T-cell (primary cell): ENCODE measurements at regions of chr6 and their contacts with region 1.

Region 1: DNA sequence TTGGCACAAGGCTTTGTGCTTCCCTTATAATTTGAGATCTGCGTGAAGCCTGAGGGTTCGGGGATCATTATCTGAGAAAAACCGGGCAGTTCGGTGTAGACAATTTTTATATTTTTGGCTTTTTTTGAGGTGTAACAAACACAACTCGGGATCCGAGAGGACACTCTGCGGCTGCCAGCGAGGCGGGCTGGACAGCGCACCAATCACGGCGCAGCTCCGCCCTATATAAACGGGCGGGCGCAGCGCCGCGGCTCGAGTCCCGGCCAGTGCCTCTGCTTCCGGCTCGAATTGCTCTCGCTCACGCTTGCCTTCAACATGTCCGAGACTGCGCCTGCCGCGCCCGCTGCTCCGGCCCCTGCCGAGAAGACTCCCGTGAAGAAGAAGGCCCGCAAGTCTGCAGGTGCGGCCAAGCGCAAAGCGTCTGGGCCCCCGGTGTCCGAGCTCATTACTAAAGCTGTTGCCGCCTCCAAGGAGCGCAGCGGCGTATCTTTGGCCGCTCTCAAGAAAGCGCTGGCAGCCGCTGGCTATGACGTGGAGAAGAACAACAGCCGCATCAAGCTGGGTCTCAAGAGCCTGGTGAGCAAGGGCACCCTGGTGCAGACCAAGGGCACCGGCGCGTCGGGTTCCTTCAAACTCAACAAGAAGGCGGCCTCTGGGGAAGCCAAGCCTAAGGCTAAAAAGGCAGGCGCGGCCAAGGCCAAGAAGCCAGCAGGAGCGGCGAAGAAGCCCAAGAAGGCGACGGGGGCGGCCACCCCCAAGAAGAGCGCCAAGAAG is 69.0 kb downstream of the HFE start:
- DNase-seq: peak; percentile 74 to 91 (median 83)
- ATAC-seq: peak; percentile 41 to 65 (median 63)
- H3K4me3 ChIP-seq: peak overlapping the region; percentile 73 to 87
- H3K4me3 Mint-ChIP-seq: peak overlapping the region; percentile 91 to 98 (median 97)
- H3K27ac ChIP-seq: peak overlapping the region; percentile 90
- H3K27ac Mint-ChIP-seq: peak overlapping the region; percentile 94 to 98
- H3K4me1 ChIP-seq: peaks cover 15 to 31% of the 10 kb centered on the region in 2 experiments
- H3K4me1 Mint-ChIP-seq: peaks cover 28 to 60% (median 40%) of the 10 kb centered on the region in 3 donors
- H3K27me3 ChIP-seq: no peaks in the 10 kb centered on the region
- H3K27me3 Mint-ChIP-seq: no peaks in the 10 kb centered on the region

Region 2: DNA sequence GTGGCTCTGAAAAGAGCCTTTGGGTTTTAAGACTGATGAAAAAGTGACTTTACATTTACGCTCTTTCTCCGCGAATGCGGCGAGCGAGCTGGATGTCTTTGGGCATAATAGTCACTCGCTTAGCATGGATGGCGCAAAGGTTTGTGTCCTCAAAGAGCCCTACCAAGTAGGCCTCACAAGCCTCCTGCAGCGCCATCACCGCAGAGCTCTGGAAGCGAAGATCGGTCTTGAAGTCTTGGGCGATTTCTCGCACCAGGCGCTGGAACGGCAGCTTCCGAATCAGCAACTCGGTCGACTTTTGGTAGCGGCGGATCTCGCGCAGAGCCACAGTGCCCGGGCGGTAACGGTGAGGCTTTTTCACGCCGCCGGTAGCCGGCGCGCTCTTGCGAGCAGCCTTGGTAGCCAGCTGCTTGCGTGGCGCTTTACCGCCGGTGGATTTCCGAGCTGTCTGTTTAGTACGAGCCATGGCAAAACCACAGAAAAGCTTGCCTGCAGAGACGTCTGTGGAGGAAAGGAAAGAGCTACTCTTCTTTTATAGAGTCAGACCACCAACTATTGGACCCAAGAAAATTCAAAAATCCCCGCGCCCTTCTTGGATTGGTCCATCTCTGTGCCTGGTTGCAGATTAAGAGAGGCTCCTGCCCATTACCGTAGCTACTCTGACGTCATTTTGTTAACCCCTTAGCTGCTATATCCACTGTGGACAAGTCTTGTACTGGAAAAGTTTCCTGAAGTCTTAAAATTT is 124.5 kb before region 1 on chr6:
- CTCF ChIA-PET with region 1: interaction called in 1 of 2 experiments, 4 read pairs
- POLR2A ChIA-PET with region 1: interaction called in 1 of 2 experiments, 23 read pairs
- DNase-seq: peak; percentile 61 to 95 (median 87)
- ATAC-seq: peak; percentile 68 to 72 (median 70)
- H3K4me3 ChIP-seq: peak overlapping the region; percentile 61 to 84
- H3K4me3 Mint-ChIP-seq: peak overlapping the region; percentile 90 to 95 (median 92)
- H3K27ac ChIP-seq: peak overlapping the region; percentile 74
- H3K27ac Mint-ChIP-seq: peak overlapping the region; percentile 94 to 98
- H3K4me1 ChIP-seq: peaks cover 30 to 32% of the 10 kb centered on the region in 2 experiments
- H3K4me1 Mint-ChIP-seq: peaks cover 48 to 53% (median 50%) of the 10 kb centered on the region in 3 donors
- H3K27me3 ChIP-seq: no peaks in the 10 kb centered on the region
- H3K27me3 Mint-ChIP-seq: peaks cover 0 to 2% of the 10 kb centered on the region in 2 donors

Region 3: GRCh38 chr6:26136321-26136720 is 19.9 kb before region 1 on chr6:
- CTCF ChIA-PET with region 1: interaction called in 1 of 2 experiments, 3 read pairs
- POLR2A ChIA-PET with region 1: interaction called, 7 to 10 read pairs
- DNase-seq: no peak
- ATAC-seq: no peak
- H3K4me3 ChIP-seq: no peak overlapping the region
- H3K4me3 Mint-ChIP-seq: no peak overlapping the region
- H3K27ac ChIP-seq: no peak overlapping the region
- H3K27ac Mint-ChIP-seq: peak overlapping the region; percentile 36 to 61
- H3K4me1 ChIP-seq: peaks cover 0 to 16% of the 10 kb centered on the region in 2 experiments
- H3K4me1 Mint-ChIP-seq: peaks cover 33 to 56% (median 41%) of the 10 kb centered on the region in 3 donors
- H3K27me3 ChIP-seq: no peaks in the 10 kb centered on the region
- H3K27me3 Mint-ChIP-seq: no peaks in the 10 kb centered on the region

Region 4: GRCh38 chr6:26204332-26205165 is 48.3 kb after region 1 on chr6:
- CTCF ChIA-PET with region 1: interaction called in 1 of 2 experiments, 27 read pairs
- POLR2A ChIA-PET with region 1: interaction called, 92 to 311 read pairs
- DNase-seq: peak; percentile 73 to 96 (median 82)
- ATAC-seq: peak; percentile 63 to 70 (median 68)
- H3K4me3 ChIP-seq: peak overlapping the region; percentile 73 to 98
- H3K4me3 Mint-ChIP-seq: no peak overlapping the region
- H3K27ac ChIP-seq: peak overlapping the region; percentile 93
- H3K27ac Mint-ChIP-seq: no peak overlapping the region
- H3K4me1 ChIP-seq: peaks cover 23 to 37% of the 10 kb centered on the region in 2 experiments
- H3K4me1 Mint-ChIP-seq: peaks cover 17 to 28% (median 24%) of the 10 kb centered on the region in 3 donors
- H3K27me3 ChIP-seq: no peaks in the 10 kb centered on the region
- H3K27me3 Mint-ChIP-seq: no peaks in the 10 kb centered on the region

Region 5: DNA sequence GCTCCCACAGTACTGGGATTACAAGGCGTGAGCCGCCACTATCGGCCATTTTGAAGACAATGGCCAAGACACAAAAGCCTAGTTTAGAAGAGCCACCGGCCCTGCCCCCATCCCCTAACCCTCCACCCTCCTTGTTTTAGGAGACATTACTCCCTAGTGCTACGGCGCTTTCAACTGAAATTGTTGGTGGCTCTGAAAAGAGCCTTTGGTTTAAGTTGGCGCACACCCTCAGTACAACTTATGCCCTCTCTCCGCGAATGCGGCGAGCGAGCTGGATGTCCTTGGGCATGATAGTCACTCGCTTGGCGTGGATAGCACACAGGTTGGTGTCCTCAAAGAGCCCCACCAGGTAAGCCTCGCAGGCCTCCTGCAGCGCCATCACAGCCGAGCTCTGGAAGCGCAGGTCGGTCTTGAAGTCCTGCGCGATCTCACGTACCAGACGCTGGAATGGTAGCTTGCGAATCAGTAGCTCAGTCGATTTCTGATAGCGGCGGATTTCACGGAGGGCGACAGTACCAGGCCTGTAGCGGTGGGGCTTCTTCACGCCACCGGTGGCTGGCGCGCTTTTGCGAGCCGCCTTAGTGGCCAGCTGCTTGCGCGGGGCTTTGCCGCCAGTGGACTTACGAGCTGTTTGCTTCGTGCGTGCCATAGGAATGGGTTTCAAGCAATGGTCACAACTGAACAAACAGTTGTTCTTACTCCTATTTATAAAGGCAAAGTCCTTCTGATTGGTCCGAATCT is 93.9 kb after region 1 on chr6:
- CTCF ChIA-PET with region 1: interaction called in 1 of 2 experiments, 14 read pairs
- POLR2A ChIA-PET with region 1: interaction called, 14 to 25 read pairs
- DNase-seq: peak; percentile 58 to 87 (median 79)
- ATAC-seq: peak; percentile 71 to 76 (median 76)
- H3K4me3 ChIP-seq: peak overlapping the region; percentile 74 to 97
- H3K4me3 Mint-ChIP-seq: peak overlapping the region; percentile 93 to 98 (median 93)
- H3K27ac ChIP-seq: peak overlapping the region; percentile 83
- H3K27ac Mint-ChIP-seq: peak overlapping the region; percentile 88 to 93
- H3K4me1 ChIP-seq: peaks cover 12 to 24% of the 10 kb centered on the region in 2 experiments
- H3K4me1 Mint-ChIP-seq: peaks cover 29 to 47% (median 42%) of the 10 kb centered on the region in 3 donors
- H3K27me3 ChIP-seq: no peaks in the 10 kb centered on the region
- H3K27me3 Mint-ChIP-seq: no peaks in the 10 kb centered on the region

Region 6: DNA sequence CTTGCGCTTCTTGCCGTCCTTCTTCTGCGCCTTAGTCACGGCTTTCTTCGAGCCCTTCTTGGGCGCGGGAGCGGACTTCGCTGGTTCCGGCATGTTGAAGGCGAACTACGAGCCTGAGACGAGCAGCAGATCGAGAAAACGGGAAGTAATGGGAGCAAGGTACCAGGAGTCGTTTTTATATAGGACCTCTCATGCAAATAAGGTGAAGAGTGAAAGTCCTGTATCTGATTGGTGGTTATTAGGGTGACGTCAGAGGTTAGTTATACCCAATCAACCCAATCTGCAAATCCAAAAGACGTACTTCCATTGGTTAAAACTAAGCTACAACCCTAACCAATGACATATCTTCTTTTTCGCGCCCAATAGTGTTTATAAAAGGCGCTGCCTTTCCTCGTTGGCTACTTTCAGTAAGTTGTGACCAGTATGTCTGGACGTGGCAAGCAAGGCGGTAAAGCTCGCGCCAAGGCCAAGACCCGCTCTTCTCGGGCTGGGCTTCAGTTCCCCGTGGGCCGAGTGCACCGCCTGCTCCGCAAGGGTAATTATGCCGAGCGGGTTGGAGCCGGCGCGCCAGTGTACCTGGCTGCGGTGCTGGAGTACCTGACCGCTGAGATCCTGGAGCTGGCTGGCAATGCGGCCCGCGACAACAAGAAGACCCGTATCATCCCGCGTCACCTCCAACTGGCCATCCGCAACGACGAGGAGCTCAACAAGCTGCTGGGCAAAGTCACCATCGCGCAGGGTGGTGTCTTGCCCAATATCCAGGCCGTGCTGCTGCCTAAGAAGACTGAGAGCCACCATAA is 990.6 kb after region 1 on chr6:
- CTCF ChIA-PET with region 1: no interaction called
- POLR2A ChIA-PET with region 1: interaction called, 4 to 11 read pairs
- DNase-seq: peak; percentile 43 to 96 (median 69)
- ATAC-seq: peak; percentile 85 to 88 (median 86)
- H3K4me3 ChIP-seq: peak overlapping the region; percentile 77 to 93
- H3K4me3 Mint-ChIP-seq: no peak overlapping the region
- H3K27ac ChIP-seq: peak overlapping the region; percentile 91
- H3K27ac Mint-ChIP-seq: no peak overlapping the region
- H3K4me1 ChIP-seq: peaks cover 11 to 29% of the 10 kb centered on the region in 2 experiments
- H3K4me1 Mint-ChIP-seq: peaks cover 13 to 20% (median 18%) of the 10 kb centered on the region in 3 donors
- H3K27me3 ChIP-seq: no peaks in the 10 kb centered on the region
- H3K27me3 Mint-ChIP-seq: no peaks in the 10 kb centered on the region